Prostate gland (tissue), 2 donors: ENCODE measurements at regions of chr11 and their contacts with region 1.

Region 1: DNA sequence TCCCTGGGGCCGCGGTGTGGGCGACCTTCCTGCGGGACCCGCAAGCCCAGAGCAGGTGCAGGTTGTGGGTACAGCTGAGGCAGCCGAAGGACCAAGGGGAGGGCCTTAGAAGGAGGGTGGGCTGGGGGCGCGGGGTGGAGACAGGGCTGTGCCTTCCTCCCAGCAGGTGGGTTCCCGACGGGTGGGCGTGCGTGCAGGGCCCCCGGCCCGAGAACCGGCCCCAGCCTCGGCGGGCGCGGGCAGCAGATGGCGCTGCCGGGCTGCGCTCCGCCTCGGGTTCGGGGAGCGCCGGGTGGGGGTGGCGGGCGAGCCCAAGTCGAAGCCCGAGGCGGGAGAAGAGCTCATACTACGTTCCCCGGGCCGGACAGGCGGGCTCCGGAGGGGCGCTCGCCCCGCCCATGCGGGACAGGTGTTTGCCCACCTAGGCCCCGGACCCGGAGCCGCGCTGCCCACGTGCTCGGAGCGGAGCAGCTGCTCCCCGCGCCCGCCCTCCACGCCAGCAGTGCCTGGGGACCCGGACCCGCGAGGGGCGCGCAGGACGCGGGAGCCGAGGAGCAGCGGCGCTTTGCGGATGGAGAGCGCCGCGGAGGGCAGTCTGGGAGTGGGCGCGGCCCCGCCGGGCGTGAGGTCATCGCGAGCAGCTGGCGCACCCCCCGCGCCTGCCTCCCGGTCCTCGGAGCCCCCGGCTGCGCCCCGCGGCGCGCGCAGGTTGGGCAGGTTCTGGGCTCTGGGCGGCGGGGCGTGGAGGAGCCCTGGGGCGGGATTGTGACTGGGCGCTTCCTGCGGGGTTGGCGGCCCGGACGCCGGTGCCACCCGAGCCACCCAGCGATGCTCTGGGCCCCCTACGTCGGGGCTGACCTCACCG is 25.3 kb downstream of the DUSP8 start:
- DNase-seq: no peak
- H3K4me3 ChIP-seq: peak overlapping the region; percentile 14 to 30
- H3K27ac ChIP-seq: no peak overlapping the region
- H3K4me1 ChIP-seq: peaks cover 9% of the 10 kb centered on the region
- H3K27me3 ChIP-seq: peaks cover 16% of the 10 kb centered on the region
- CTCF ChIP-seq: peak; percentile 67 to 87 (median 79)
- POLR2A ChIP-seq: peak; percentile 9

Region 2: GRCh38 chr11:1336836-1337646 is 209.7 kb before region 1 on chr11:
- intact Hi-C with region 1: no loop called
- DNase-seq: no peak
- H3K4me3 ChIP-seq: peak overlapping the region; percentile 29 to 39
- H3K27ac ChIP-seq: peak overlapping the region; percentile 42 to 43
- H3K4me1 ChIP-seq: peaks cover 12% of the 10 kb centered on the region
- H3K27me3 ChIP-seq: no peaks in the 10 kb centered on the region
- CTCF ChIP-seq: no peak
- POLR2A ChIP-seq: no peak

Region 3: GRCh38 chr11:1574238-1574932 is 27.6 kb after region 1 on chr11:
- intact Hi-C with region 1: loop called (anchors 2 kb)
- DNase-seq: peak; percentile 46
- H3K4me3 ChIP-seq: peak overlapping the region; percentile 17 to 40
- H3K27ac ChIP-seq: peak overlapping the region in 1 of 2 donors; percentile 14
- H3K4me1 ChIP-seq: peaks cover 9% of the 10 kb centered on the region
- H3K27me3 ChIP-seq: no peaks in the 10 kb centered on the region
- CTCF ChIP-seq: peak; percentile 70 to 96 (median 89)
- POLR2A ChIP-seq: no peak